PC-9 (cell line): ENCODE measurements at regions of chr15 and their contacts with region 1.

Region 1: DNA sequence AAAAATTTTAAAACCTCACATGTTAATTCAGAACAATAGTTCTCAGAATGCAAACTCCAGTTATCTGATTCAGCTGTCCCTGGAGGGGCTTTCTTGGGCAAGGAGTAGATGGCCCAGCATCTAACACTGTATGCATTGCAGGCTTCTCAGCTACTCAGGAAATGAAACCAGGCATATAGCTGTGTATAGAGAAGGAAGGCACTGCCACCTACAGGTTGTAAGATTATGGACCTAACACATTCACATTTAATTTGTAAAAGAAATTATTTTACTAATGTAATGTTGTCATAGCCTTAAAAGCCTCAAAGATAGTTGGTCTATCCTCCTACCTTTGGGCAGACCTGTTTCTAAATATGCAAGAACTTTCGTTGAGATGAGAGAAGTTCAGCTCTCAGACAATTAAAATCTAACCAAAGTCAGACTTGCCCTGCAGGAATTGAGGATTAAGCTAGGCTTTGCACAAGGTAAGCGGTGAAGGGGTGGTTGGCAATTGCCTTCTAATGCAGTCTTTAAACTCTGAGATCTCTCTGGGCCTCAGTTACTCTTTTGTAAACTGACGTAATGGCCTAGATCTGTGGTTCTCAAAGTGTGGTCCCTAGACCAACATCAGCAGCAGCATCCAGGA is 132.8 kb upstream of the SLC24A5 start:
- DNase-seq: no peak
- H3K4me3 ChIP-seq: no peak overlapping the region
- H3K27ac ChIP-seq: no peak overlapping the region
- H3K4me1 ChIP-seq: no peaks in the 10 kb centered on the region
- H3K27me3 ChIP-seq: no peaks in the 10 kb centered on the region
- CTCF ChIP-seq: peak; percentile 67

Region 2: DNA sequence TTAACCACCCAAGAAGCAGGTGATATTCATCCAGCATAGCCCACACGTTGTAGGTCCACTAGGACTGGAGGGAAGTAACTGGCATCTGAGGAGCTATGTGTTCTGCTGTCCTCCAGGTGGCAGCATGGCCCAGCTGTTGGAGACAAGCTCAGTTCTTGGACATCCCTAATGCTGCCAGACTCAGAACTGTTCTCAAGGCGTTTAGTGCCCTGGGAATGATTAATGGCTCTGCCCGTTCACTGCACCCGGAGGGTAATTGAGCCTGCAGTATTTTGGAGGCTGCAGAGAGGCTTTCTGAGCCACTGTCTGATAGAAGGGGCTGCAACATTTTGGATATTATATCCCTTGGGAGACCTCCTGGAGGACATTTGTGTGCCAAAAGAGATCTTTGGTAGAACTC is 792.0 kb before region 1 on chr15:
- CTCF ChIA-PET with region 1: interaction called, 20 read pairs
- POLR2A ChIA-PET with region 1: no interaction called
- intact Hi-C with region 1: loop called (anchors 1 kb)
- DNase-seq: peak; percentile 54 to 57
- H3K4me3 ChIP-seq: no peak overlapping the region
- H3K27ac ChIP-seq: no peak overlapping the region
- H3K4me1 ChIP-seq: no peaks in the 10 kb centered on the region
- H3K27me3 ChIP-seq: no peaks in the 10 kb centered on the region
- CTCF ChIP-seq: peak; percentile 72

Region 3: GRCh38 chr15:47711654-47712053 is 276.4 kb before region 1 on chr15:
- CTCF ChIA-PET with region 1: no interaction called
- POLR2A ChIA-PET with region 1: no interaction called
- intact Hi-C with region 1: loop called (anchors 5 kb)
- DNase-seq: no peak
- H3K4me3 ChIP-seq: no peak overlapping the region
- H3K27ac ChIP-seq: no peak overlapping the region
- H3K4me1 ChIP-seq: no peaks in the 10 kb centered on the region
- H3K27me3 ChIP-seq: peaks cover 4% of the 10 kb centered on the region; the same call in 1 of the 2 replicates
- CTCF ChIP-seq: peak; percentile 49; the same call in 1 of the 2 replicates